HCT116 (cell line): ENCODE measurements at regions of chr16 and their contacts with region 1.

Region 1: GRCh38 chr16:23595951-23596720 is at the start of gene NDUFAB1:
- DNase-seq: peak; percentile 67
- ATAC-seq: peak; percentile 88
- H3K4me3 ChIP-seq: peak within 1 kb of the TSS; percentile 85 to 100
- H3K27ac ChIP-seq: peak within 1 kb of the TSS; percentile 77
- H3K4me1 ChIP-seq: peaks cover 16 to 25% of the 10 kb centered on the region in 2 experiments; a peak in 3 of 4 replicates
- H3K27me3 ChIP-seq: no peaks in the 10 kb centered on the region
- CTCF ChIP-seq: peak; percentile 68 to 99 (median 82)
- POLR2A ChIP-seq: peak; percentile 55
- RAD21 ChIP-seq: 0 out of 2 replicates have a peak, but pooled peaks have one; percentile 31
- total RNA-seq, gene NDUFAB1: 169 TPM

Region 2: DNA sequence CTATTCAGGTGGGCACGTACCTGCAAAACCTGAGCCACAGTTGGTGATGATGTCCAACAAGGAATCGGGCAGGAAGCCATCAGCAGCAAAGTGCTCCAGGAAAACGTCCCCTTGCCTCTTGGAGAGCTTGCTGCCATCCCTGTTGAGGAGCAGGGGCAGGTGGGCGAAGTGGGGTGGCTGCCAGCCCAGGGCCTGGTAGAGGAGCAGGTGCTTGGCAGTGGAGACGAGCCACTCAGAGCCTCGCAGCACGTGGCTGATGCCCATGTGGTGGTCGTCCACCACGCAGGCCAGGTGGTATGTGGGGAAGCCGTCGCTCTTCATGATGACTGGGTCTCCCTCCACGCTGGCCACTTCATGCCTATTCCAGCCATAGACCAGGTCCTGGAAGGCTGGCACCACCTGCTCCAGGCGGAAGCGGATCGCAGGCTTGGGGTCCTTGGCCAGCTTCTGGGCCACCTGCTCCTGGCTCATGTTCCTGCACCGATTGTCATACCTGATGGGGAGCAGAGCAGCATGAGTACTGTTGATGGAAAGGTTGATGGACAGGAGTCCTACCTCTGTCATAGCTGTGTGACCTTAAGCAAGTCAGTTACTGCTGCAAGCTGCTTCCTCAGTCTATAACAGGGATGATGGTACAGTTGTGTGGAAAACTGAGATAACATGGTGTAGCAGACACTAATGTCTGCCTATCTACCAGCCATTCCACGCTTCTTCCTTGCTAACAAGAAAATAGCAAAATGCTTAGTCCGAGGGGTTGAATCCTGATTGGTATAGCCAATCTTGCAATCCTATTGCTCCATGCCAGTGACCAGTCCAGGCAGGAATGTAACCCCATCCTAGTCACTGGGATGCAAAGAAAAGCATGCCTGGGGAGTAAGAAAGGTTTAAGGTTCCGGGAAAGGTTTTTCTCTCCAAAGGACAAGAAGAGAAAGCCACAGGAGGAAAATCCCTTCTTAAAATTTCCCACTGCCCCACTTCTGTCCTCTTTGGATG is 61.0 kb before region 1 on chr16:
- CTCF ChIA-PET with region 1: no interaction called
- POLR2A ChIA-PET with region 1: no interaction called
- RAD21 ChIA-PET with region 1: no interaction called
- intact Hi-C with region 1: no loop called
- DNase-seq: no peak
- ATAC-seq: no peak
- H3K4me3 ChIP-seq: no peak overlapping the region
- H3K27ac ChIP-seq: no peak overlapping the region
- H3K4me1 ChIP-seq: peaks cover 7 to 17% of the 10 kb centered on the region in 2 experiments
- H3K27me3 ChIP-seq: no peaks in the 10 kb centered on the region
- CTCF ChIP-seq: no peak
- POLR2A ChIP-seq: no peak
- RAD21 ChIP-seq: no peak

Region 3: DNA sequence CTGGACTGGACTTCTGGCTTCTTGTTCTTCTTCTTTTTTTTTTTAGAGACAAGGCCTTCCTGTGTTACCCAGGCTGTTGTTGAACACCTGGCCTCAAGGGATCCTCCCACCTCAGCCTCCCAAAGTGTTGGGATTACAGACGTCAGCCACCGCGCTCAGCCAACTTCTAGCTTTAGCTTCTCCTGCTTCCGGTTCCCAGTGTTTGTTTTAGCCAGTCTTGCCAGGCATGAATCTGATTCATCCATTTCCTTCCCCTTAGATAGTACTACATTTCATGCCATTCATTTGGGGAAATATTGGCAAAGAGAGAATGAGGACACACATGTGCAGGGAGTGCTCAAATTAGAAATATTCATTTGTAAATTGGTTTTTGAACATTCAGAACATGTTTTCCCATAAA is 12.1 kb after region 1 on chr16:
- CTCF ChIA-PET with region 1: interaction called, 11 read pairs
- POLR2A ChIA-PET with region 1: no interaction called
- RAD21 ChIA-PET with region 1: no interaction called
- intact Hi-C with region 1: no loop called
- DNase-seq: no peak
- ATAC-seq: no peak
- H3K4me3 ChIP-seq: no peak overlapping the region
- H3K27ac ChIP-seq: no peak overlapping the region
- H3K4me1 ChIP-seq: peaks cover 0 to 7% of the 10 kb centered on the region in 2 experiments; a peak in 1 of 4 replicates
- H3K27me3 ChIP-seq: no peaks in the 10 kb centered on the region
- CTCF ChIP-seq: no peak
- POLR2A ChIP-seq: no peak
- RAD21 ChIP-seq: no peak

Region 4: GRCh38 chr16:23640931-23641765 is 45.0 kb after region 1 on chr16 and contains the starts of genes DCTN5 and PALB2:
- CTCF ChIA-PET with region 1: interaction called, 7 read pairs
- POLR2A ChIA-PET with region 1: interaction called, 3 read pairs
- RAD21 ChIA-PET with region 1: no interaction called
- intact Hi-C with region 1: loop called (anchors 2 kb)
- DNase-seq: peak; percentile 81
- ATAC-seq: peak; percentile 97
- H3K4me3 ChIP-seq: peak within 1 kb of the TSS; percentile 70 to 100
- H3K27ac ChIP-seq: peak within 1 kb of the TSS; percentile 70
- H3K4me1 ChIP-seq: peaks cover 2 to 23% of the 10 kb centered on the region in 2 experiments; a peak in 3 of 4 replicates
- H3K27me3 ChIP-seq: no peaks in the 10 kb centered on the region
- CTCF ChIP-seq: no peak
- POLR2A ChIP-seq: peak; percentile 61
- RAD21 ChIP-seq: no peak
- total RNA-seq, gene DCTN5: 42.9 TPM
- total RNA-seq, gene PALB2: 15.6 TPM